Mammary epithelial cell (primary cell): ENCODE measurements at regions of chr19 and their contacts with region 1.

Region 1: DNA sequence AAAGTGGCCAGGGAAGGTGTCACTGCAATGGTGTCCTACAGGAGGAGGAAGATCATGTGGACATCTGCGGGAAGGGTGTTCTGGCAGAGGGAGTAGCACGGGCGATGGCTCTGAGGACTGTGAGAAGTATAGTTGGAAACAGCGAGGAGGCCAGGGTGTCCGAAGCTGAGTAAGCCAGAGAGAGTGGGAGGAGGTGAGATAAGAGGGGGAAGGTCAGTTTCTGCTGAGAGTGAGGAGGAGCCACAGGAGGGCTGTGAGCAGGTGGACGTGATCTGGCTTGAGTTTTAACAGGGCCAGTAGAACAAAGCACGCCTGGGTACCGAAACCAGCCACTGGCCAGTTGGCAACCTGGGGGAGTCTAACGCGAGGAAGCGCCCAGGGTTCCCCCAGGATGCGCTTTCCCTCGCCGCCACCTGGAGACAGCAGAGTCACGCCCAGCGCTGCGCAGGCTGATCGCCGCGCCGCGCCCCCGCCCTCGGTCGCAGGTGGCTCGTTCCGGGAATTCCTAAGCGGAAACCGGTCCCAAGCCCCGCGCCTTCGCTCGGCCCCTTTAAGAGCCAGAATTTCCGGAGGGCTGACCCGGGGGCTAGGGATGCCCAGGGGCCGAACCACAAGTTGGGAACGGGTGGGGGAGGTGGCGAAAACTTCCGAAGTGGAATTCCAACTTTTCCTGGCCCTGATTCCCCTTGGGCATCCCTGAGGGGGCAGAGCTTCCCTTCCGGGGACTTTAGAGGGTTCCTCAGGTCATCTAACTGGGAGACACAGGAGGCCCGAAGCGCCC is 1.1 kb upstream of the LSR start:
- DNase-seq: peak; percentile 96
- H3K4me3 ChIP-seq: peak overlapping the region; percentile 93 to 99 (median 95)
- H3K27ac ChIP-seq: peak overlapping the region; percentile 93
- H3K4me1 ChIP-seq: peaks cover 18% of the 10 kb centered on the region
- H3K27me3 ChIP-seq: no peaks in the 10 kb centered on the region
- CTCF ChIP-seq: peak; percentile 39 to 78

Region 2: GRCh38 chr19:35168207-35168606 is 79.5 kb before region 1 on chr19:
- CTCF ChIA-PET with region 1: no interaction called
- dilution Hi-C with region 1: no loop called
- in situ Hi-C with region 1: loop called in 1 of 2 experiments (anchors 10 kb)
- intact Hi-C with region 1: loop called (anchors 5 kb)
- DNase-seq: peak; percentile 89
- H3K4me3 ChIP-seq: no peak overlapping the region
- H3K27ac ChIP-seq: peak overlapping the region; percentile 49
- H3K4me1 ChIP-seq: peaks cover 49% of the 10 kb centered on the region
- H3K27me3 ChIP-seq: no peaks in the 10 kb centered on the region
- CTCF ChIP-seq: peak in 1 of 2 donors; percentile 43

Region 3: DNA sequence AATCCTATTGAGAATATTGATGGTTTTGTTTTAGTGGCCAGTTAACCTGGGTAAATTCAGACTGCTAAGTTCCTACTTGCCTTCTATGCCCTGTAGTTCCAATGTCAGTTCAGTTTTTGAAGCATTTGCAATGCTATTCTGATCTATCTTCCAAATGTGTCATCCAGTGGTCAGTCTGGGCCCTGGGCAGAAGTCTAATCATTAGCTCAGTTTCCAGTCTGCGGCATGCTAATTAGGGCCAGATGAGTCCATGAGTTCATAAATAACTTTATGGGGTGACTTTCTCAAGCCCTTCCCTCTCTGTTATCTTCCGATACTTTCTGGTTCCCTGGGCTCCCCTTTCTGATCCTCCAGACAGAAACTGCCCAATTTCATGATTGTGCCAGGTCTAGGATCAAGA is 51.9 kb before region 1 on chr19:
- CTCF ChIA-PET with region 1: no interaction called
- dilution Hi-C with region 1: no loop called
- in situ Hi-C with region 1: no loop called
- intact Hi-C with region 1: loop called (anchors 5 kb)
- DNase-seq: no peak
- H3K4me3 ChIP-seq: no peak overlapping the region
- H3K27ac ChIP-seq: no peak overlapping the region
- H3K4me1 ChIP-seq: no peaks in the 10 kb centered on the region
- H3K27me3 ChIP-seq: peaks cover 3% of the 10 kb centered on the region
- CTCF ChIP-seq: no peak

Region 4: DNA sequence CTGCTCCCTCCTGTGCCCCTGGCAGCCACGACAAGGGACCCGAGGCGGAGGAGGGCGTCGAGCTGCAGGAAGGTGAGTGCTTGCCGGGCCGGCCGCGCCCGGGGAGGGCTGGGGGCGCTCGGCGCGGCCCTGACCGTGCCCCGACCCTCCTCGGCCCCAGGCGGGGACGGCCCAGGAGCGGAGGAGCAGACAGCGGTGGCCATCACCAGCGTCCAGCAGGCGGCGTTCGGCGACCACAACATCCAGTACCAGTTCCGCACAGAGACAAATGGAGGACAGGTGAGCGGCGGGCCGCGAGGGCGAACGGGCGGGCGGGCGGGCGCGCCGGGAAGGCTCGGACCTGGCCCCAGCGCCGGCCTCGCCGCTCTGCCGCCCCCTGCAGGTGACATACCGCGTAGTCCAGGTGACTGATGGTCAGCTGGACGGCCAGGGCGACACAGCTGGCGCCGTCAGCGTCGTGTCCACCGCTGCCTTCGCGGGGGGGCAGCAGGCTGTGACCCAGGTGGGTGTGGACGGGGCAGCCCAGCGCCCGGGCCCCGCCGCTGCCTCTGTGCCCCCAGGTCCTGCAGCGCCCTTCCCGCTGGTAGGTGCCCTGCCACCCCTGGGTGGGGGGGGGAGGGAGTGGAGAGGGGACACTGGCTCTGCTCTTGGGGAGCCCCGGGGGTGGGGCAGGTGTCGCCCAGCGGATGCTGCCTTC is 21.9 kb after region 1 on chr19:
- CTCF ChIA-PET with region 1: no interaction called
- dilution Hi-C with region 1: no loop called
- in situ Hi-C with region 1: no loop called
- intact Hi-C with region 1: loop called (anchors 1 kb)
- DNase-seq: peak; percentile 70
- H3K4me3 ChIP-seq: peak overlapping the region; percentile 15 to 72 (median 62)
- H3K27ac ChIP-seq: no peak overlapping the region
- H3K4me1 ChIP-seq: peaks cover 37% of the 10 kb centered on the region
- H3K27me3 ChIP-seq: no peaks in the 10 kb centered on the region
- CTCF ChIP-seq: peak; percentile 26 to 61

Region 5: GRCh38 chr19:35468637-35469036 is 220.9 kb after region 1 on chr19:
- CTCF ChIA-PET with region 1: no interaction called
- dilution Hi-C with region 1: no loop called
- in situ Hi-C with region 1: no loop called
- intact Hi-C with region 1: loop called (anchors 1 kb)
- DNase-seq: peak; percentile 24
- H3K4me3 ChIP-seq: no peak overlapping the region
- H3K27ac ChIP-seq: no peak overlapping the region
- H3K4me1 ChIP-seq: no peaks in the 10 kb centered on the region
- H3K27me3 ChIP-seq: no peaks in the 10 kb centered on the region
- CTCF ChIP-seq: peak; percentile 64 to 92

Region 6: DNA sequence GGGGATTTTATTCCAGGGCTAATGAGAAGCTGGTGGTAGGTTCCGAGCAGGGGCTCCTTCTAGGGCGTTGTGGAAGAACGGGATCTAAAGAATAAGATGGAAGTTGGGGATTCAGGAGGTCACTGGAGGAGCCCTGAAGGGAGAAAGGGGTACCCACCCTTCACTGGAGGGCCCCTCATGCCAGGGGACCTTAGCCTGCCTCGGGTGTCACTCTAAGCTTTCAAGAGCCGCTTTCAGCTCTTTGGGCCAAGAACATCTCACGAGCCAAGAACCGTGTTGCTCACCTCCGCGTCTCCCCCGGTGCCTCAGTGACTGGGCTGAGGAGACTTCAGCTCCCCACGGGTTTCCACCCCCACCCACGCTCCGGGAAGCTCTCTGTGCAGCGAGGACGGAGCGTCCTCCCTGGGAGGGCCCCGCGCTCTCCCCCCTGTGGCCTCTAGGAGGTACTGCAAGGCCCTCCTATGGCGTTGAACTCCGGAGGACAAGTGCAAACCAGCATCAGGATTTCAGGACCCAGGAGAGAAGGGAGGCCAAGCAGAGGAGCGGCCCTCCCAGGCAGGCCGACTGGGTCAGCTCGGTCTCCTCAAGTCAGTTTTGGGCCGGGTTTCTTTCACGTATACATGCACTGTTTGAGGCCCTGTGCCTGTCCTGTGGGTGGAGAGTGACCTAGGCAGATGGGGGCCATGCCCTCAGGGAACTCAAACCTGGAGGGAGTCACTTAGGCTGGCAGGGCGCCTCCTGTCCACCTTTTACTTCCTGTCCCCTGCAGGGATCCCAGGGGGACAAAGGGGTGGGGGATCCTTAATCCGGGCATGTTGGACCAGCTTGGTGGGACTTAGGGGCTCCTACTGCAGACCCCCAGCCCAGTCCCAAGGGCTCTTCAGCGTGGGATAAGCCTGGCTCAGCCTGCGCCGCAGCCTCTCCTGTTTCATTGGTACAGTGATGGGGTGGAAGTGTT is 247.7 kb after region 1 on chr19:
- CTCF ChIA-PET with region 1: no interaction called
- dilution Hi-C with region 1: no loop called
- in situ Hi-C with region 1: no loop called
- intact Hi-C with region 1: loop called (anchors 1 kb)
- DNase-seq: peak; percentile 57
- H3K4me3 ChIP-seq: peak overlapping the region in 1 of 3 experiments; percentile 9
- H3K27ac ChIP-seq: no peak overlapping the region
- H3K4me1 ChIP-seq: peaks cover 6% of the 10 kb centered on the region
- H3K27me3 ChIP-seq: peaks cover 3% of the 10 kb centered on the region
- CTCF ChIP-seq: peak; percentile 94 to 99